ENCODE measurements at regions of chr6 and their contacts with region 1.

Region 1: GRCh38 chr6:33439956-33440648 is 14.3 kb upstream of the ZBTB9 start:
- DNase-seq: peak; percentile 66 to 78 (median 74)
- ATAC-seq: peak; percentile 73
- H3K4me3 ChIP-seq: no peak overlapping the region
- H3K27ac ChIP-seq: peak overlapping the region; percentile 53; the same call in 2 of the 3 replicates
- H3K4me1 ChIP-seq: peaks cover 19 to 32% of the 10 kb centered on the region in 2 experiments
- H3K27me3 ChIP-seq: no peaks in the 10 kb centered on the region
- CTCF ChIP-seq: peak in 2 of 3 experiments; percentile 4 to 22; a peak in 1 of 6 replicates
- EP300 ChIP-seq: no peak
- POLR2A ChIP-seq: no peak
- RAD21 ChIP-seq: no peak

Region 2: DNA sequence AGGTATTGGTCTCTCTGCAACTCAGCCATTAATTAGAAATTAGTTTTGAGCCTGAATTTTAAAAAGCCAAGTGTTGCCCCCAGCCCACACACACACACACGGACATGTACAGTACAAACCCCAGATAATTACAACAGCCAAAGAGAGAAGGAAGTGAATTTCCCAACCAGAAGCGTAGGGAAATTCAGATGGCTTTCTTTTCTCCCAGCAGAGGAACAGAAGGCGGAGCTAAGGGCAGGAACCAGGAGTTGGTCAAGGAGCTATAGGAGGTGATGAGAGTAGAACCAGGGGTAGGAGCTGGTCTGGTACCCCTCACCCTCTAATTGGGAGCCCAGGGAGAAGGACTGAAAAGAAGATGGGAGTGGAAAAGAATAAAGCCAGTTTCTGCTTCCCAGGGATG is 10.3 kb after region 1 on chr6:
- CTCF ChIA-PET with region 1: no interaction called
- POLR2A ChIA-PET with region 1: interaction called, 30 read pairs
- in situ Hi-C with region 1: no loop called
- intact Hi-C with region 1: no loop called
- DNase-seq: no peak
- ATAC-seq: no peak
- H3K4me3 ChIP-seq: no peak overlapping the region
- H3K27ac ChIP-seq: no peak overlapping the region
- H3K4me1 ChIP-seq: peaks cover 5 to 11% of the 10 kb centered on the region in 2 experiments; a peak in 3 of 5 replicates
- H3K27me3 ChIP-seq: no peaks in the 10 kb centered on the region
- CTCF ChIP-seq: no peak
- EP300 ChIP-seq: no peak
- POLR2A ChIP-seq: no peak
- RAD21 ChIP-seq: no peak

Region 3: DNA sequence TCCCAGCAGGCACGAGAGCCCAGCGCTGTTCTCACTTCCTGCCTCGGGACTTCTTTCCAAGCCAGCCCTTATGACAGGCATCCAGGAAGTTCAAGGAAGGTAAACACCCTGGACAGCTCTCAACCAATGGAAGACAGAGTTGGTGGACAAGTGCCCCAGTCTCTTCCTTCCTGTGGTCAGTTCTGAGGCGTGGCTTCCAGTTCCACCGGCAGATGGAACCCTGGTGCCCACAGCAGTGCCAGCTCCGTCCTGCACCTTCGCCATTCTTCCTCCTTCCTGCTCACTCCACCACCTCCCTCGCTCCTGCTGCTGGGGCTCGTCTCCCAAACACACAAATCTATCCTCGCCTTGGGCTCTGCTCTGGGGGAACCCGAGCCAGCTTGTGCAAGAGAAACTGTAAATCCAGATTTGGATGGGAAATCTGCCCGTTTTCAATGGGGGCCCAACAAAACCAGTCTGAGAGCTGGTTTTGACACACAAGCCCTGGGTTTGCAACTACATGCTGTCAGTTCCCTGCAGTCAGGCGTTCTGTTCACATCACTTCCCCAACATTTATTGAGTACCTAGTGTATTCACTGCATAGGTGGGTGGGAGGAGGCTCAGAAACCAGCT is 543.1 kb after region 1 on chr6:
- CTCF ChIA-PET with region 1: no interaction called
- POLR2A ChIA-PET with region 1: no interaction called
- in situ Hi-C with region 1: no loop called
- intact Hi-C with region 1: no loop called
- DNase-seq: peak; percentile 21 to 57 (median 48)
- ATAC-seq: peak; percentile 59
- H3K4me3 ChIP-seq: no peak overlapping the region
- H3K27ac ChIP-seq: no peak overlapping the region
- H3K4me1 ChIP-seq: peaks cover 0 to 14% of the 10 kb centered on the region in 2 experiments; a peak in 2 of 5 replicates
- H3K27me3 ChIP-seq: peaks cover 23 to 82% of the 10 kb centered on the region in 2 experiments; a peak in 4 of 5 replicates
- CTCF ChIP-seq: 0 out of 6 replicates have a peak, but pooled peaks of 1 of the 3 experiments have one; percentile 6
- EP300 ChIP-seq: no peak
- POLR2A ChIP-seq: no peak
- RAD21 ChIP-seq: no peak